ENCODE measurements at regions of chr19 and their contacts with region 1.

Region 1: GRCh38 chr19:54168174-54168917 is 4.6 kb downstream of the TMC4 start:
- DNase-seq: no peak
- H3K4me3 ChIP-seq: no peak overlapping the region
- H3K27ac ChIP-seq: no peak overlapping the region
- H3K4me1 ChIP-seq: peaks cover 19% of the 10 kb centered on the region
- H3K27me3 ChIP-seq: no peaks in the 10 kb centered on the region
- CTCF ChIP-seq: peak; percentile 56 to 71 (median 68)
- POLR2A ChIP-seq: no peak

Region 2: DNA sequence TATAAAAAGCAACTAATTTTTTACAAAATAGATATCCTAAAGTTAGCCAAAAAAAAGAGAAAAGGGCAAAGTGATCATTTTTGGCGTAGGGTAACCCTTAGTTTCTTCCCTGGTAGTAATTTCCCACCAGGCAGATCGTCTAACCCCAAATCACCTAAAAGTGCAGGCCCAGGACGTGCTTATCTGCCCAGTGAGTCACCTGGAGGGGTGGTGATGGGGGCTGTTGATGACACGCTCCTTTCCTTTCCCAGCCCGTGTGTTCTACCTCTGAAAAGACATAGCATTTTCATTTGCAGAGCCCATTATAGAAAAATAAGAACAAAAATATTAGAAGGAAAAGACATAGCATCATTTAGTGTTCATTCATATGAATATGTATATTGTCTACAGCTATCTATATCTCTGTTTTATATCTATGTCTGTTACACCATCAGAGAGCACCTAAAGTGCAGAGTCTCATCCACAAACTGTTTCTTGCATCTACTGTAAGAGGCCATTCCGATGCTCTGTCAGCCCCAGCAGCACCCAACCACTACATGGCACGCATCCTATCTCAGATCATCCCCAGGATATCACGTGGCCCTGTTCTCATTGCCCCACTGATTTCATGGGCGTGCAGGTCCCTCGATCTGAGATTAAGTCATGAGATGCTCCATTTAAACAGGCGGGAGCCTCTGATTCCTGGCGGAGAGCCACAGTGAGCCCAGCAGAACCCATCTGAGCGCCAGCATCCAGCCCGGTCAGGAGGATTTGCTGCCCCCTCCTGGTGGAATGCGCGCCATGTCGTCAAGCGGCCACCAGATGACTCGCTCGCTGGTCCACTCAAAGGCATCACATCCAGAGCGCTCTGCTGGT is 63.0 kb after region 1 on chr19:
- intact Hi-C with region 1: loop called (anchors 2 kb)
- DNase-seq: no peak
- H3K4me3 ChIP-seq: no peak overlapping the region
- H3K27ac ChIP-seq: no peak overlapping the region
- H3K4me1 ChIP-seq: no peaks in the 10 kb centered on the region
- H3K27me3 ChIP-seq: no peaks in the 10 kb centered on the region
- CTCF ChIP-seq: peak; percentile 75 to 87 (median 86)
- POLR2A ChIP-seq: no peak

Region 3: GRCh38 chr19:54325194-54325621 is 156.9 kb after region 1 on chr19:
- intact Hi-C with region 1: no loop called
- DNase-seq: no peak
- H3K4me3 ChIP-seq: no peak overlapping the region
- H3K27ac ChIP-seq: no peak overlapping the region
- H3K4me1 ChIP-seq: no peaks in the 10 kb centered on the region
- H3K27me3 ChIP-seq: no peaks in the 10 kb centered on the region
- CTCF ChIP-seq: peak; percentile 27 to 61 (median 41)
- POLR2A ChIP-seq: no peak

Measured in vagina (tissue), 2 donors.